Naive thymus-derived CD4-positive, alpha-beta T cell (primary cell): ENCODE measurements at regions of chr14 and their contacts with region 1.

Region 1: GRCh38 chr14:58501214-58501816 is 73.8 kb downstream of the KIAA0586 start:
- DNase-seq: peak in 7 of 9 donors; percentile 21 to 62 (median 51)
- ATAC-seq: peak; percentile 78
- H3K4me3 ChIP-seq: no peak overlapping the region
- H3K4me3 Mint-ChIP-seq: no peak overlapping the region
- H3K27ac ChIP-seq: no peak overlapping the region
- H3K27ac Mint-ChIP-seq: no peak overlapping the region
- H3K4me1 ChIP-seq: no peaks in the 10 kb centered on the region
- H3K4me1 Mint-ChIP-seq: no peaks in the 10 kb centered on the region
- H3K27me3 ChIP-seq: no peaks in the 10 kb centered on the region
- H3K27me3 Mint-ChIP-seq: no peaks in the 10 kb centered on the region

Region 2: GRCh38 chr14:58571769-58572472 is 70.6 kb after region 1 on chr14:
- CTCF ChIA-PET with region 1: interaction called, 10 read pairs
- POLR2A ChIA-PET with region 1: no interaction called
- intact Hi-C with region 1: loop called (anchors 1 to 2 kb)
- DNase-seq: peak in 8 of 9 donors; percentile 41 to 80 (median 69)
- ATAC-seq: peak; percentile 87
- H3K4me3 ChIP-seq: no peak overlapping the region
- H3K4me3 Mint-ChIP-seq: peak overlapping the region; percentile 35 to 83 (median 70)
- H3K27ac ChIP-seq: peak overlapping the region; percentile 40
- H3K27ac Mint-ChIP-seq: peak overlapping the region; percentile 74 to 96 (median 93)
- H3K4me1 ChIP-seq: peaks cover 0 to 33% of the 10 kb centered on the region in 2 donors
- H3K4me1 Mint-ChIP-seq: peaks cover 14 to 67% (median 51%) of the 10 kb centered on the region in 7 donors
- H3K27me3 ChIP-seq: no peaks in the 10 kb centered on the region
- H3K27me3 Mint-ChIP-seq: no peaks in the 10 kb centered on the region

Region 3: DNA sequence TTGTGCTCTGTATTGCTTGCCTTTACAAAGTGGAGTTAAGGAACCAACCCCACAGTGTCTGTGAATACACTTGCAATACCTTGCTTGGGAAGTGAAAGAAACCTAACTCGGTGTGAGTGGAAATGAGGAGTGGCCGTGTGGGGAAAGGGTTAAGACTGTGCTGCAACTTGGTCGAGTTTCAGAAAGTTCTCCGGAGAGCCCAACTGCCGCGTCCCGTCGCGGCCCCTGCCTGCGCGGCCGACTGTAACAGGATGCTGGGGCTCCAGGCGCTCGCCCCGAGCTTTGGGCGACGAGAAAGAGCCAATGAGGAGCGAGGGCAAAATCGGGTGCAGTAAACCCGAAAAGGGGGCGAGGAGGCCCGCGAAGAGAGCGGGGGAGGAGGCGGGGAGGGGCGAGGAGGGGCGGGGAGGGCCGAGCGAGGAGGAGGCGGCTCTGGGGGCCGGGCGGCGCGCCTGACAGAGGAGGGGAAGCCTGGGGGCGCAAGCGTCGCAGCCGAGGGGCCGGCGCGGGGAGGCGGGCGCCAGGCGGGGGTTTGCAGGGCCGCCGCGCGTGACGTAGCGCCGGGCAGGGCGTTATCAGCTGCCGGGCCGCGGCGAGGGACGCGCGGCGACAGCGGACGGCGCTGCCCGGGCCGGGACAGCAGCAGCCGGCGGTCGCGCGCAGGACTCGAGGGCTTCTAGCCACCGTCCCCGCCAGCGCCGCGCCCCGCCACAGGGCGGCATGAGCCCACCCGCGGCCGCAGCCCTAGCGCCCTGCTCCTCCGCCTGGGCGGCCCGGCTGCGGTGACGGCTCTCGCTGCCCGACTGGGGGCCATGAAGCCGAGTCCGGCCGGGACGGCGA is 136.3 kb after region 1 on chr14 and contains the start of gene DACT1:
- CTCF ChIA-PET with region 1: interaction called, 60 read pairs
- POLR2A ChIA-PET with region 1: interaction called, 11 read pairs
- intact Hi-C with region 1: loop called (anchors 1 to 2 kb)
- DNase-seq: peak; percentile 45 to 74 (median 64)
- ATAC-seq: peak; percentile 80
- H3K4me3 ChIP-seq: peak within 1 kb of the TSS; percentile 80
- H3K4me3 Mint-ChIP-seq: peak within 1 kb of the TSS; percentile 89 to 99 (median 98)
- H3K27ac ChIP-seq: peak within 1 kb of the TSS; percentile 61
- H3K27ac Mint-ChIP-seq: peak within 1 kb of the TSS; percentile 84 to 95 (median 91)
- H3K4me1 ChIP-seq: peaks cover 0 to 22% of the 10 kb centered on the region in 2 donors
- H3K4me1 Mint-ChIP-seq: peaks cover 20 to 61% (median 45%) of the 10 kb centered on the region in 7 donors
- H3K27me3 ChIP-seq: no peaks in the 10 kb centered on the region
- H3K27me3 Mint-ChIP-seq: peaks cover 0 to 44% (median 6%) of the 10 kb centered on the region in 5 donors
- total RNA-seq, gene DACT1: 8.2 to 32.3 (median 15.0) TPM

Region 4: DNA sequence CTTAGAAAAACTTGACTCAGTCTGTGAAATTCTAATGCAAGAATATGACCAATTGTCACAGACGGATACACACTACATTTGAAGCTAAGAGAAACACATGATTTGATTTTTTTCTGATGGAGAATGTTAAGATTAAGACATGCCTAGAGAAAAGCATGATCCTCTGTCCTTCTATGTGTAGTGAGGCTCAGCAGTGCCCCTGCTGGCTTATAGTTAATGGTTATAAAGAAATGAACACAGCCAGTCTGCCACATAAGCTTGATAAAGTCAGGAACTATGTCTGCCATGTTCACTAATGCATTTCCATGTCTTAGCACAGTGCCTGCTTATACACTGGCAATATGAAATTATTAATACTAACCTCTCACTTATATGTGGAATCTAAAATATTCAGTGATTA is 519.1 kb after region 1 on chr14:
- CTCF ChIA-PET with region 1: interaction called, 3 read pairs
- POLR2A ChIA-PET with region 1: no interaction called
- intact Hi-C with region 1: loop called in 1 of 2 experiments (anchors 1 kb)
- DNase-seq: peak in 2 of 9 donors; percentile 1 to 12
- ATAC-seq: no peak
- H3K4me3 ChIP-seq: no peak overlapping the region
- H3K4me3 Mint-ChIP-seq: no peak overlapping the region
- H3K27ac ChIP-seq: no peak overlapping the region
- H3K27ac Mint-ChIP-seq: no peak overlapping the region
- H3K4me1 ChIP-seq: no peaks in the 10 kb centered on the region
- H3K4me1 Mint-ChIP-seq: peaks cover 0 to 4% (median 0%) of the 10 kb centered on the region in 7 donors
- H3K27me3 ChIP-seq: no peaks in the 10 kb centered on the region
- H3K27me3 Mint-ChIP-seq: peaks cover 0 to 10% (median 4%) of the 10 kb centered on the region in 5 donors

Region 5: GRCh38 chr14:59055439-59056045 is 554.2 kb after region 1 on chr14:
- CTCF ChIA-PET with region 1: interaction called, 22 read pairs
- POLR2A ChIA-PET with region 1: interaction called, 3 read pairs
- intact Hi-C with region 1: loop called (anchors 1 kb)
- DNase-seq: peak in 7 of 9 donors; percentile 10 to 60 (median 36)
- ATAC-seq: peak; percentile 83
- H3K4me3 ChIP-seq: no peak overlapping the region
- H3K4me3 Mint-ChIP-seq: no peak overlapping the region
- H3K27ac ChIP-seq: no peak overlapping the region
- H3K27ac Mint-ChIP-seq: no peak overlapping the region
- H3K4me1 ChIP-seq: no peaks in the 10 kb centered on the region
- H3K4me1 Mint-ChIP-seq: no peaks in the 10 kb centered on the region
- H3K27me3 ChIP-seq: no peaks in the 10 kb centered on the region
- H3K27me3 Mint-ChIP-seq: peaks cover 0 to 11% (median 5%) of the 10 kb centered on the region in 5 donors

Region 6: GRCh38 chr14:59438195-59438647 is 936.9 kb after region 1 on chr14:
- CTCF ChIA-PET with region 1: no interaction called
- POLR2A ChIA-PET with region 1: no interaction called
- intact Hi-C with region 1: loop called in 1 of 2 experiments (anchors 5 kb)
- DNase-seq: no peak
- ATAC-seq: no peak
- H3K4me3 ChIP-seq: no peak overlapping the region
- H3K4me3 Mint-ChIP-seq: no peak overlapping the region
- H3K27ac ChIP-seq: no peak overlapping the region
- H3K27ac Mint-ChIP-seq: no peak overlapping the region
- H3K4me1 ChIP-seq: no peaks in the 10 kb centered on the region
- H3K4me1 Mint-ChIP-seq: no peaks in the 10 kb centered on the region
- H3K27me3 ChIP-seq: no peaks in the 10 kb centered on the region
- H3K27me3 Mint-ChIP-seq: peaks cover 0 to 5% (median 0%) of the 10 kb centered on the region in 5 donors